GM10248 (cell line): ENCODE measurements at regions of chr6 and their contacts with region 1.

Region 1: GRCh38 chr6:85323435-85324040 is 126.3 kb upstream of the NT5E start:
- DNase-seq: peak; percentile 49
- CTCF ChIP-seq: peak; percentile 90

Region 2: DNA sequence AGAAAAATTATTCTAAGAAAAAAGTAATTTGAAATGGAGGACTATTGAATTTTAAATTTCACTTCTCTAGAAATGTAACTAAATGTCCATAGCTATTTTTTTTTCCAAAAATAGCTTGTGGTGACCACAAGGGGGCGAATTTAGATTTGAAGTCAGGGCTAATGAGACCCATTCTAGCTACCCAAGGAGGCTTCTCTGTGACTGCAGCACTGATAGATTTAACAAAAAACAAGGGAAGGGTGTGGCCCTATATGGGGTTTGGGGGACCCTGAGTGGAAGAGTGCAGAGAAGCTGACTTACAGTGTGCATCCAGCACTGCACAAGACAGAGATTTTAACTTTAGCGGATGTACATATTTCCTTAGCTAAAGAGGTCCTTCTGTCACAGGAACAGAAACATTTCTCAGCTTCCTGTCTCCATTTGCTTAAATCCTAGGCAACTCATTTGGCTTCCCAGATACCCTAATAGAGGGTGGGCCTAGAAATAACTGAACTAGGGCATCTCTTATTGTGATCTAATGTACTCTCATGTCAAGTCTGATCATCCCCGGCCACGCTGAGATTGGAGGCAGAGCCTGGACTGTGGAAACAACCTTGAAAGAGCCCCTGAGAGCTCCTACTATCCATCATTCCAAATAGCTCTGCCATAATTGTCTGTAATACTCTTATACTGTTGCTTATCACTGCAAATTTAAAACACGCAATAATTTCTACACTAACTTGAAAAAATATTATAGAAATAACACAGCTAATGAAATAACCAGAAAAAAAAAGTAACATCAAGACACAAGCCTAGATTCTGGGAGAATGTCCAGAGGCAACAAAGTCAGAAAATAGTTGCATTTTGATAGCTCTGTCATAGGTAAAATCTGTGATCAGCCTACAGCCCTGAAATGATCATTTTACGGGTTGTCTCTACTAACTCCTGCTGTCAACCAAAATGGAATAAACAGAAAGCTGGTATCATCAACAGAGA is 1708.2 kb before region 1 on chr6:
- CTCF ChIA-PET with region 1: interaction called, 13 read pairs
- POLR2A ChIA-PET with region 1: no interaction called
- DNase-seq: peak; percentile 14
- CTCF ChIP-seq: peak; percentile 27

Region 3: DNA sequence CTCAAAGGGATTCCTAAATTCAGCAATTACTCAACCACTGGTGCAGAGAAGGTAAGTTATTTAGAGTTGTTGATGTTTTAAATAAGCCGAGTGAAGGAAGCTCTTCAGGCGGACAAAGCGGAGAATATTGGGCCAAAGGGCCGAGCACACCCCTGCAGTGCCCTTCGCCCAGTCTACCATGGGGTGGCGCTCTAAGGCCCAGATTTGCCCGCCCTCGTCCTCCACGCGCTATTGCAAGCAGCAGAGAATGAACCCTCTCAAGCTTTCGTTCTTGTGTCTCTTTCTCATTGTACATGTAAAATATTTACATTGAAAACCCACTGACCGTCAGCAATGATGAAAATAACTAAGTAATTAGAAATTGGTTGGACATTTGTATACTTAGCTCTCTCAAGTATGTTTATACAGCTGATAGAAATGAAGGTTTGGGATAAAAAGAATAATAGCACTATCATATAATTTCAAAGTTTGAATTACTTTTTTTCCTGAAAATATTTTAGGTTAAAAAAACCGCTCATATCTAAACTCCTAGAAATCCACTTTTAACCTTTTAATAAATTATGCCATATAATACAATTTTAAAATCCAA is 901.1 kb before region 1 on chr6:
- CTCF ChIA-PET with region 1: interaction called, 17 read pairs
- POLR2A ChIA-PET with region 1: no interaction called
- DNase-seq: peak; percentile 17
- CTCF ChIP-seq: peak; percentile 46

Region 4: DNA sequence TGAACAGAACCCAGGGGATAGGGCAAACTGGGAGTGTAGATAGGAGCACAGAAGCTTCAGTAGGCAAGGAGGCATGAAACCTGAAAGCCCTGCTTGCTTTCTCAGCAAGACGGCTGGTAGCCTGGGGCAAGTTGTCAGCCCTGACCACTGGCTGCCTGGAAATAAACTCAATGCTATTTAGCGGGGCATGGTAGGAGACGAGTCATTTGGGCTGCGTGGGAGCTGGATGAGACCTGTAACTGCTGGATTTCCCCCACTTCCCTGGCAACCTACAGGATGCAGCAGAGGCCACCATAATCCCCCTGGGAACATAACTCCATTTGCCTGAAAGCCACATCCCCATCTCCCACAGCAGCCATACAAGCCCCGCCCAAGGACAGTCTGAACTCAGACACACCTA is 226.6 kb before region 1 on chr6:
- CTCF ChIA-PET with region 1: no interaction called
- POLR2A ChIA-PET with region 1: no interaction called
- DNase-seq: no peak
- CTCF ChIP-seq: no peak

Region 5: DNA sequence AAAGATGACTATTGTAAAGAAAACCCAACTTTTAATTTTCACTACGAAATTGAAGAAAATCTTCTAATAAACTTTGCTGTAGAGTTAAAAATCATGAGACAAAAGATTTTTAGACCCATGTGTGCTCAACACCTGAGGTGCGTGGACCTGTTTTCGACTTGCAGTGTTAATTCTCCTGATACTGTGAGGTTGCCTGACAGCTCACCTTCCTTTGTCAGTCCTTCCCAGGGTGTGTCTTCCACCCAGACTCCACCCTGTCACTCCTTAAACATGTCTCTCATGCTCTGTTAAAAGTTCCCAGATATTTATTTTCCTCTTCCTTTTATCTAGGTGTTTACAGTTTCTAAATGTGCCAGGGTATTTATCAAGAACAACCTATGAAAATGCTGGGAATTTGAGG is 25.0 kb before region 1 on chr6:
- CTCF ChIA-PET with region 1: interaction called, 12 read pairs
- POLR2A ChIA-PET with region 1: no interaction called
- DNase-seq: no peak
- CTCF ChIP-seq: no peak

Region 6: GRCh38 chr6:85344996-85345395 is 21.5 kb after region 1 on chr6:
- CTCF ChIA-PET with region 1: interaction called, 14 read pairs
- POLR2A ChIA-PET with region 1: no interaction called
- DNase-seq: no peak
- CTCF ChIP-seq: no peak